ENCODE measurements at regions of chr2 and their contacts with region 1.

Region 1: DNA sequence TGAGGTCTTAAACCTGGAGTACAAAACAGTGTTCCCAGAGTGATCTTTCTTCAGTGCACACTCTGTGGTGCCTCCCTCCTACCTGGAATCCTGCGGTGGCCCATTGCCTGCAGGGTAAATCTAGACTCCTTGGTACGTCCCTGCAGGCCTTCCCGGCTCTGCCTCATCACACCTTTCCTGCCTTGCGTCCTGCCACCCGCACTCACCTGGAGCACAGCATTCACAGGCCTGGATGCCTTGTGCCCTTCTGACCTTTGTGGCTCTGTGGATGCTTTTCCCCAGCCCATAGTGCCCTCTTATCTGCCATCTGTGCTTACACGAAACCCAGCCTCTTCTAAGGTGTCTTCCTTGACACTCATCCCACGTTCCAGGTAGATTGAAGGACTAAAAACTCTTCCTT is 62.7 kb downstream of the PRKRA start:
- DNase-seq: no peak
- H3K4me3 ChIP-seq: no peak overlapping the region
- H3K27ac ChIP-seq: no peak overlapping the region
- H3K4me1 ChIP-seq: peaks cover 9% of the 10 kb centered on the region
- H3K27me3 ChIP-seq: no peaks in the 10 kb centered on the region
- CTCF ChIP-seq: no peak
- POLR2A ChIP-seq: no peak

Region 2: DNA sequence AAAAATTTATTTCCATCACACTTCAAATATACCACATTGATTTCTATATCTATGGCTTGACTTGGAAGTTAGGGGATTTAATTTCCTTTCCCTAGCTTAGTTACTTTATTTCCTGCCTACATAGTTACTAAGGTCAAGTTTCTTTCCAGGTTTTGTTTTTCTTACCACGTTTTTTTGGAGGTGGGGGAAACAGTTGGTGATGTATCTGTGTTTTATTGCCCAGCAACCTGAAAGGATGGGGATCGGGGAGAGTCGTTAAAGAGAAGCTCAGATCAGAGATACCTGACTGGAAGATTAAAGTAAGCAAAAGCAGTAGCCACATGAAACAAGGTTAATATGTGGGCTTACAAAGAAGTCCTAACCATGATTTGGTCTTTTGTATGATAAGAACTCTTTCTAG is 66.2 kb before region 1 on chr2:
- CTCF ChIA-PET with region 1: no interaction called
- POLR2A ChIA-PET with region 1: no interaction called
- dilution Hi-C with region 1: no loop called
- intact Hi-C with region 1: loop called (anchors 2 kb)
- DNase-seq: peak; percentile 60
- H3K4me3 ChIP-seq: no peak overlapping the region
- H3K27ac ChIP-seq: no peak overlapping the region
- H3K4me1 ChIP-seq: no peaks in the 10 kb centered on the region
- H3K27me3 ChIP-seq: no peaks in the 10 kb centered on the region
- CTCF ChIP-seq: no peak
- POLR2A ChIP-seq: no peak